Mammary epithelial cell (primary cell): ENCODE measurements at regions of chr9 and their contacts with region 1.

Region 1: DNA sequence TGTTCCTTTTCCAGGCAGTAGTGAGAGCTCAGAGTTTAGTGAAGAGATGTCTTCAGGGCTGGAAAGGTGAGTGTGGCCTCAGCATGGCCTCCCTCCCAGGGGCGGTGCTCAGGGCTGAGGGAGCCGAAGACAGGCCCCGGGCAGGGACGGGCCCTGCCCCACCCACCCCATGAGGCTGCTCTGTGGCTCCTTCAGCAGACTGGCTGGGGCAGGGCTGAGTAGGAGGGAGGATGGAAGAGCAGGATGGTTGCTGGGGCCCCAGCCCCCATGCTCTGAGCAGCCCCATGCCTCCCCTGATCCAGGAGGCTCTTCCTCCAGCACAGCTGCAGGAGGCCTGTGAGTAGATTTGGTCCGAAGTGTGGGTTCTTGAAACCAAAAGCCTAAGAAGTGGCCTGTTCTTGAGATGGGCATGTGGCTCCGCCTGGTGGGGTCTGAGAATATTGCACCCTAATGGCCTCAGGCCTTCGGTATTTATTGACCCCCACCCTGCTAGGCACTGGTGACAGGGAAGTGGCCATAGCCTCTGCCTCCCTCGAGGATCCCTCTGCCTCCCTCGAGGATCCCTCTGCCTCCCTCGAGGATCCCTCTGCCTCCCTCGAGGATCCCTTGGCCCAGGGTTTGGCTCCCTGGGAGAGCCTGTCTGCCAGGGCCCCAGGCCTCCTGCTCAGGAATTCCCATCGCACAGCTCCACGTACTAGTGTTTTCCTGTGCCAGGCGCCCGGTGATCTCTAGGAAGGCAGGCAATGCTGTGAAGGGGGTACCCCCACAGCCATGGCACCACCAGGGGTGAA is 65.4 kb upstream of the GARNL3 start:
- DNase-seq: peak; percentile 42
- H3K4me3 ChIP-seq: no peak overlapping the region
- H3K27ac ChIP-seq: no peak overlapping the region
- H3K4me1 ChIP-seq: no peaks in the 10 kb centered on the region
- H3K27me3 ChIP-seq: peaks cover 4% of the 10 kb centered on the region
- CTCF ChIP-seq: peak; percentile 84 to 91

Region 2: DNA sequence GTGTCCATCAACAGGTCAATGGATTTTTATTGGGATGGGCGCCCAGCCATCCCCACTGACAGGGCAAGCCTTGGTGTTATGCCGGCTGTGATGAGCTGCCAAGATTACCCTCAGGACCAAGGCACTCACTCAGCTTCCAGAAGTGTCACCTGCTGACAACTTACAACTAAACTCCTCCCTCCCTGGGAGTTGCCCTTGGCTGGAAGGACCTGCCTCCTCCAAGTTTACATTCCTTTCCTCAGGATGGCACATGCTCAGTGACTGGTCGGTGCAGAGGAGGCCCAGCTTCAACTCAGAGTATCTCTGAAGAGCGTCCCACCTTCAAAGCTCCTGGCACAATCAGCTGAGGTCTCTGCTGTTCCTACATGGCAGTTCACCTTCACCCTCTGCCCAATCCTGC is 446.8 kb before region 1 on chr9:
- CTCF ChIA-PET with region 1: interaction called, 30 read pairs
- dilution Hi-C with region 1: no loop called
- in situ Hi-C with region 1: no loop called
- intact Hi-C with region 1: no loop called
- DNase-seq: peak; percentile 31
- H3K4me3 ChIP-seq: no peak overlapping the region
- H3K27ac ChIP-seq: no peak overlapping the region
- H3K4me1 ChIP-seq: peaks cover 11% of the 10 kb centered on the region
- H3K27me3 ChIP-seq: peaks cover 2% of the 10 kb centered on the region
- CTCF ChIP-seq: no peak

Region 3: DNA sequence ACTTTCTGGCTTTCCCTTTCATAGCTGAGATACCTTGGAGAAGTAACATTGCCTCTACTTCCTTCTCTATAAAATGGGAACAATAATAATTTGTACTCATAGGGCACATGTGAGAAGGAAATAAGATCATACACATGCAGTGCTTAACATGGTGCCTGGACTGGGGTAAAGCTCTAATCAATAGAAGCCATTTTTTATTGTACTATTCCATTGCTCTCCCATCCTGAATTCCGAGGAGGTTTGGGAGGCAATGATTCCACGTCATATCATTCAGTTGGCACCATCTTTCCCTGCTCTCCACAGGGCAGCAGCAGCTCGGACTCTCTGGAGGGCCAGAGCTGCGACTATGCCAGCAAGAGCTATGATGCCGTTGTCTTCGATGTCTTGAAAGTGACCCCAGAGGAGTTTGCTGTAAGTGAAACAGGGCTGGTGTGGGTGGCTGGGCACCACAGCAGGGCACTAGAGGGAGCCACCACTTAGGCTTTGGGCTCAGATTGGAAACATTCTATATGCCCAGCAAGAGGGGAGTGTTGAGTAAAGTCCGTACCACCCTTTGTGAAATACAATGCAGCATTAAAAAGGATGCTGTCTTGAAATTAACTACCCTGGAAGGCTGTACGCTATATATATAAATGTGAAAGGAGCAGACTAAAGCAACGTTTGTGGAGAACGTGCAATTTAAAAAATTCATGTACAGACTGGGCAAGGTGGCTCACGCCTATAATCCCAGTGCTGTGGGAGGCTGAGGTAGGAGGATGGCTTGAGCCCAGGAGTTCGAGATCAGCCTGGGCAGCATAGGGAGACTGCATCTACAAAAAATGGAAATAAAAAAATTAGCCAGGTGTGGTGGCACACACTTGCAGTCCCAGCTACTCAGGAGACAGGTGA is 233.4 kb before region 1 on chr9:
- CTCF ChIA-PET with region 1: no interaction called
- dilution Hi-C with region 1: no loop called
- in situ Hi-C with region 1: no loop called
- intact Hi-C with region 1: loop called (anchors 1 kb)
- DNase-seq: peak; percentile 27
- H3K4me3 ChIP-seq: no peak overlapping the region
- H3K27ac ChIP-seq: no peak overlapping the region
- H3K4me1 ChIP-seq: no peaks in the 10 kb centered on the region
- H3K27me3 ChIP-seq: peaks cover 6% of the 10 kb centered on the region
- CTCF ChIP-seq: peak; percentile 82 to 95

Region 4: DNA sequence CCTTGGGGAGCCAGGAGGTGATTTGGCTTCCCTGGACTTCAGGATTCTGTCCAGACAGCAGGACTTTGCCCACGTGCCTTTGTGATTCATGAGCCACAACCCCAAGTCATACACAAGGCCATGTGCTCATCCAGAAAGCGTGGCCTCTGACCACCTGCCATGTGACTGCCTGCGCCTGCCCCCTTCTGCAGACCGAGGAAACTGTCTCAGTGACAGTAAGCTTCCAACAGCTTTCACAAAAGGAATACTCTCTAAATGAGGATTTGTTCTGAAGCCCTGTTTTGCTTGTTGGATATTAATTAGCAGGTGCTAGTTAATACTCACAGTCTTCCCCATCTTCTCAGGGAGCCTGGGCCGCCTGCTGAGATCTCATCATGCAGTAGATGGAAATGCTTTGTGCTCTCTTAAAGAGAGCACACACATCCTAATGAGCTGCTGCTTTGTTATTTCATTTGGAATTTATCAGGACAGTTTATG is 39.8 kb before region 1 on chr9:
- CTCF ChIA-PET with region 1: no interaction called
- dilution Hi-C with region 1: no loop called
- in situ Hi-C with region 1: no loop called
- intact Hi-C with region 1: no loop called
- DNase-seq: peak; percentile 51
- H3K4me3 ChIP-seq: no peak overlapping the region
- H3K27ac ChIP-seq: no peak overlapping the region
- H3K4me1 ChIP-seq: peaks cover 4% of the 10 kb centered on the region
- H3K27me3 ChIP-seq: peaks cover 9% of the 10 kb centered on the region
- CTCF ChIP-seq: no peak

Region 5: DNA sequence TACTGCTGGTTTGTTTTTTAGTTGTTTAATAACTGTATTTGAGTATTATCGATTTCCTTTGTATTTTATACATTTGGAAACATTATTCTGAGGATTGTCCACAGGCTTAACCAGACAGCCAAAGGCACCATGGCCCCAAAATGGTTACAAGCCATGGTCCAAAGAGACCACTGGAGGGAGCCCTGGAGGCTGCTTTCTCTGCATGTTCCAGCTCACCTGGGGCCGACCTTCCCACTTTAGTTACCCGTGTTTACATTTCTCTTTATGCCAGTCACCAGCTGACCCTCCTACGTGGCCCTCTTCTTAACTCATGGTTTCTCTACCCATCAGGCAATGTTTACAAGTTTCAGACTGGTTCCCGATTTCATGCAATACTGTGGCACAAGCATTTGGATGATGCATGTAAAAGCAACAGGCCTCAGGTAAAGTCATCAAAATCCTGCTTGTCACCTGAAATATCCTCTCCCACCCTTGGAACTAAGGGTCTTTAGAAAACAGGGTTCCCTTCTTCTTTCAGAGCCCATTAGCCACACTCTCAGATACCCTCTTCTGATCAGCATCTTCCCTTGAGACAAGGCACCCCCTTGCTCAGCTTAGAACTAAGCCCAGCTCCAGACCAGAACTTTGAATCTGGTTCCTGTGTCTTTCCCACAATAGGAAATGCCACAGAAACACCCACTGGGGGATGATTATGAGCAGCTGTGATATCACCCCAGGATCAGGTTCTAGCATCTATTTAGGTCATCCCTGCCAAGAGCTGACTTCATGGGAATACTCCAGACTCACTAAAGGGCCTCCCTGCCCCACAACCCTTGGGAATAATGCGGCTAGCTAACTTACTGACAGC is 15.4 kb after region 1 on chr9:
- CTCF ChIA-PET with region 1: no interaction called
- dilution Hi-C with region 1: no loop called
- in situ Hi-C with region 1: no loop called
- intact Hi-C with region 1: no loop called
- DNase-seq: peak; percentile 52
- H3K4me3 ChIP-seq: no peak overlapping the region
- H3K27ac ChIP-seq: no peak overlapping the region
- H3K4me1 ChIP-seq: no peaks in the 10 kb centered on the region
- H3K27me3 ChIP-seq: no peaks in the 10 kb centered on the region
- CTCF ChIP-seq: peak; percentile 85 to 92

Region 6: DNA sequence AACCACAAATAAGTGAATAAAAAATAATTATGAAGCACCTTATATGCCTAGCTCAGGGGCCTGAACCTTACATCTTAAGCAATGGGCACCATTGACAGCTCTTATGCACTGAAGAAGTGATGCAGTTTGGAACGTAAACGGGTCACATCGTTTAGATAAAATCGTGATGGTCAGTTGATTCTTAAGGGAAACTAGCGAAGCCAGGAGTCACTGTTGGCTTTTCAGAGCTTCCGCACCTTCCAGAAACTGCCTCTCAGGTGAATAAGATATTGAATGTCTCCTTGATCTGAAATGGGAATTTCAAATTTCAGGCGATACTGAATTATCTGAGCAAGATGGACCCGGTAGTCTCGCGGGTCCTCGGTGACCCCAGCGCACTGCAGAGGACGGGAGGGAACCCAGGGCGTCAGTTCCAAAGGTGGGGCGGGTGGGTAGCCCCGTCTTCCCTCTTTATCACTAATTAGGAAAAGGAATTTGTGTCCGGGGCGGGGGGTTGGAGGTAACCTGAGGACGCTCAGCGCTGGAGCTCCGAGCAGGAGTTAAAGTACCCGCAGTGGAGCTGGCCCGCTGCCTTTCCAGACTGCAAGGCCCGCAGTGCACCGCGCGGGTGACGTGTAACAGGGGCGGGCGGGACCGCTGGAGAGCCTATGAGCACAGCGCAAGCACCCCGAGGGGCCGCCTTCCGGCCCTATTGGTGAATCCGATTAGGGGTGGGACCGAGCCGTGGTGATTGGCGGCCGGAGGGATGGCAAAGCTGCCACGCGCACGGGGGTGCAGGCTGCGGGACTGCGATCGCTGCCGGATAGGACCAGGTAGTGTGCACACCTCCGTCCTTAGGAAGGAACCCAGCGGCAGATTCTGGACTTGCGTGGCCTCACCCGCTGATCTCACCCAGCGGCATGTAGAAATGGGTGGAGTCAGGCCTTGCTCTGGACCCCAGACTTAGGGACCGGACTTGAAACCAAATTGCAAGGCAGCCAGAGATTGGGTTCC is 45.7 kb after region 1 on chr9:
- CTCF ChIA-PET with region 1: no interaction called
- dilution Hi-C with region 1: no loop called
- in situ Hi-C with region 1: no loop called
- intact Hi-C with region 1: no loop called
- DNase-seq: peak; percentile 93
- H3K4me3 ChIP-seq: peak overlapping the region; percentile 52 to 67 (median 56)
- H3K27ac ChIP-seq: peak overlapping the region; percentile 35
- H3K4me1 ChIP-seq: no peaks in the 10 kb centered on the region
- H3K27me3 ChIP-seq: no peaks in the 10 kb centered on the region
- CTCF ChIP-seq: no peak